Ascending aorta (tissue), 2 donors: ENCODE measurements at regions of chr1 and their contacts with region 1.

Region 1: DNA sequence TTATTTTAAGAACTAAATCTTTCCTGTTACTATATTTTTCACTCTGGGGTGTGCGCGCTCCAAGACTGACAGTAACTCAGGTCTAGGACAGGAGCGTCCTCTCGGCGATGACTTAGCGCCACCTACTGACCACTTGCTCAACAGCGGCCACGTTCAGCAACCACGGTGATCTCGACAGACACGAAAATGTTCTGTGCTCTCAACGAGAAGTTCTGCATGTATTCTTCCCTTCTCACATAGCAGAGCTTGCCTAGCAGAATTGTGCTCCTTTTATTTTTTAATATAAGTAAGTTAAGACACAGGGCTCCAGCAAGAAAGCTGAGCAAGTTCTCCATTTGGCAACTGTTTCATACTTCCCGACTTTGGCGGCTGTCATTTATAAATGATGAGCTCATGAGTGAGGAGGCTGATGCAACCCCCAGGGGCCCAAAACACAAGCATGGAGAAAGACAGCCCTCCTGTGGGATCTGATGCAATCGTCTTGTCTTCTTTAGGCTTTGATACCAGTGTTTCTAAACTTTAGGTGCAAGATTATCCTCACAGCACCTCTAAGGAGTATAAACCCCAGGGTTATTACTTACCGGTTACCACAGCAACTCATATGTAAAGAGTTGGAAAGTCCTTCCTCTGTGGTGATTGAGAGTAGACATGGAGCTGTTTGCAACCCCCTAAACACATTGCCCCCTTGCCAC is 92.6 kb downstream of the HHIPL2 start:
- DNase-seq: peak in 1 of 2 donors; percentile 88
- H3K4me3 ChIP-seq: peak overlapping the region; percentile 12 to 41
- H3K27ac ChIP-seq: peak overlapping the region in 1 of 2 donors; percentile 36
- H3K4me1 ChIP-seq: no peaks in the 10 kb centered on the region
- H3K27me3 ChIP-seq: no peaks in the 10 kb centered on the region
- CTCF ChIP-seq: peak; percentile 66 to 97 (median 88)

Region 2: DNA sequence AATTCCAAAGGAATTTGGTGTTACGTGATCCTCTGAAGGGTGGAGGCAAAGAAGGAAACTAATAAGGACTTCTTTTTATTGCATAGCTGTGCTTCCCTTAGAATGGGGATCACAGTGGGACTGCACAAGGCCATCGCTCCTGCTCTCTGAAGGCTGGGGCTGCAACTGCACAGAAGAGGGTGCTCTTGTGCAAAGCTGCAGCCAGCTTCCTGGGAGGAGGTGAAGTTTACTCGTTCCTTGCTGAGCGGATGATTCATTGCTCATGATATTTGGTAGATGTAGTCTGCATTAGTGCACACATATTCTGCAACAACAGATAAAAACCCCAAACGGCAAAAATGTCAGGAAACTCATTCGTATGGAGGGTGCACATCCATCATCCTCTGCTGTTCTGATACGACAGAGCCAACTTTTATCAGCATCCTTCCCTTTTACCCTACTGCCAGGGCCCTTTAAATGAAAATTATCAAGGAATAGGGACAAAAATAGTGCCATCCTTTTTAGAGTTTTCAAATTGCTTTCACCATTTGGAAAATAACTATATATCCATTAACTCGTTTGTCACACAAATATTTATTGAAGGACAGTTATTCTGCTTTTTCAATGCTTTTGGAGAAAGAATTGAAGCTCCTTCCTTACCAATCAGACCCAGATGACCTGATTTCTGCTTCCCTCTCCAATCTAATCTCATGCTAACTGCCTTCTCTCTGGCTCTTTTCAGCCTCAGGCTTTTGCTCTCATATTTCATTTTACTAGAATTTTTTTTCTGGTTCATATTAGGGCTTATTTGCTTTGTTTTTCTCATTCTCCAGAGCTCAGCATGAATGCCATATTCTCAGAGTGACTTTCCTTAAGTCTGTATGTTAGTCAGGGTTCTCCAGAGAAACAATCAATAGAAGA is 977.0 kb before region 1 on chr1:
- intact Hi-C with region 1: loop called (anchors 10 kb)
- DNase-seq: peak in 1 of 2 donors; percentile 64
- H3K4me3 ChIP-seq: no peak overlapping the region
- H3K27ac ChIP-seq: no peak overlapping the region
- H3K4me1 ChIP-seq: no peaks in the 10 kb centered on the region
- H3K27me3 ChIP-seq: no peaks in the 10 kb centered on the region
- CTCF ChIP-seq: peak in 2 of 3 experiments; percentile 16 to 50

Region 3: DNA sequence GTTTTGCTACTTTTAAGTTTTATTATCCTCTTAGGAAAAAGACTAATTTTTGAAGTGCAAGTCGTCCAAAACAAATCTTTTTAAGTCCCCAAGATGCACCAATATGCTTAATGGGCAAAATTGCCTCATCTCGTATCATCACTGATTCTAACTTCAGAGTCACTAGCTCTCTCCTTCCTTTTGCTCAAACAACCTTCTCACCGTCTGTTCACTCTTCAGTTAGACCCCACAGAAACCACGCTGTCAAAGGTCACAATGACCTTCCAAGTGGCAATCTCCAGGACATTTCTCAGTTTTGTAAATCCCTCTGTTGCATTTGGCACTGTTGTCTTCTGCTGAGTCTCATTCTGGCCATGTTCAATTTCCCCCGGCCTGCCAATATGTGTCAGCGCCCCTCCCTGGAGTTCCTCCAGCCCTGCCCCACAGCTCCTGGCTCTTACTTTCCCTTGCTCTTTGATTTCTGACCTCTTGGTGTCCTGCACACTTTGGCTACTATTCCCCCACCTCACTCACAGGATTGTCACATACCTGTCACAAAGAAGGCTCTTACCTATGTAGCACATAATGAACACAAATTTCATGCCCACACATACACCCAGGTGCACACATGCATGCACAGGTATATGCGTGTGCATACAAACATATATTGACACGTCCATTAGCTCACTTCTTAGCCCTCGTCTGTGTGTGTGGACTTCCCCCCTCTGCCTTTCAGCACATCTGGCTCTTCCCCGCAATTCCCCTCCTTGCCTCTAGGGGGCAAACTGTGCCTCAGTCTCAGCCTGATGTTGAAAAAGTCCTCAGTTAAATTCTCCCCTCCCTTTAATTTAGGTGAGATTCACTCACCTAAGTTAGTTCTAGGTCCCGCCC is 359.5 kb before region 1 on chr1:
- intact Hi-C with region 1: loop called (anchors 10 kb)
- DNase-seq: no peak
- H3K4me3 ChIP-seq: no peak overlapping the region
- H3K27ac ChIP-seq: no peak overlapping the region
- H3K4me1 ChIP-seq: no peaks in the 10 kb centered on the region
- H3K27me3 ChIP-seq: no peaks in the 10 kb centered on the region
- CTCF ChIP-seq: peak; percentile 28 to 63 (median 51)

Region 4: DNA sequence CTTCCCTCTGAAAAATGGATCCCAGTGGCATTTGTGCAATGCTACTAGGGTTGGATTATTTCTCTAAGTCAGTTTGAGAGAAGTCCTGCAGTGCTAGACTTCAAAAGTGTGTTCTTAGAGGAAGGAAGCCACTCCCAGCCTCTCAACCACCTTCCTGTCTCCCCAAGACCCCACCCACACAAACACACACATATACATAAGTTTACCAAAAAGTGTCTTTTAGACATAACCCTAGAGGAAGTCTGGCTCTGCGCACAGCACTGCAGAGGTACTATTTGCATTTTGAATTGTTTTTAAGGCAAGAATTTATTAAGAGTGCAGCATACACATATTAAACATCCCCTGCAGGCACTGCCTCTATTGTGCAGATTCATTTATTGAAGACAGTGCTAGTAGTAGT is 34.7 kb before region 1 on chr1:
- intact Hi-C with region 1: no loop called
- DNase-seq: no peak
- H3K4me3 ChIP-seq: no peak overlapping the region
- H3K27ac ChIP-seq: no peak overlapping the region
- H3K4me1 ChIP-seq: no peaks in the 10 kb centered on the region
- H3K27me3 ChIP-seq: no peaks in the 10 kb centered on the region
- CTCF ChIP-seq: no peak